IMR-90 (cell line): ENCODE measurements at regions of chr5 and their contacts with region 1.

Region 1: DNA sequence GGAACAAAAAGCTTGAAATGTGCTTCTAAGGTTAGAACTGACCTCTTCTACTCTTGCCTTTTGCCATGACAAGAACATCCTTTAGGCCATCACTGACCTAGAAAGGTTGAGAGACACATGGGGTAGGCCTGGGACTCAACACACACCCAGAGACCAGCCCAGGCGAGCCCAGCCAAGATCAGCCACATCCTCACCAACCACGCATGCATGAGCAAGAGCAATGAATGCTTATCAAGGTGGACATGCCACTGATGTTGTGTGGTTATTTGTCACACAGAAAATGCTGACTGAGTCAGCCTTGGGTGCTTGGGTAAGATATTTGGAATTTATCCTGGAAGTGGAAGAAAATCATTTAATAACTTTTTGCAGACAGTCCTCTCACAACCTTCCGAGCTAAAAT is 39.4 kb downstream of the SMIM23 start:
- DNase-seq: no peak
- ATAC-seq: no peak
- H3K4me3 ChIP-seq: no peak overlapping the region
- H3K27ac ChIP-seq: no peak overlapping the region
- H3K4me1 ChIP-seq: no peaks in the 10 kb centered on the region
- H3K27me3 ChIP-seq: peaks cover 10% of the 10 kb centered on the region
- CTCF ChIP-seq: no peak
- POLR2A ChIP-seq: no peak
- RAD21 ChIP-seq: no peak

Region 2: GRCh38 chr5:170791325-170791954 is 1033.6 kb before region 1 on chr5:
- CTCF ChIA-PET with region 1: no interaction called
- POLR2A ChIA-PET with region 1: no interaction called
- dilution Hi-C with region 1: no loop called
- in situ Hi-C with region 1: no loop called
- intact Hi-C with region 1: no loop called
- DNase-seq: peak; percentile 56
- ATAC-seq: peak; percentile 97
- H3K4me3 ChIP-seq: no peak overlapping the region
- H3K27ac ChIP-seq: no peak overlapping the region
- H3K4me1 ChIP-seq: no peaks in the 10 kb centered on the region
- H3K27me3 ChIP-seq: peaks cover 19% of the 10 kb centered on the region
- CTCF ChIP-seq: peak; percentile 61
- POLR2A ChIP-seq: no peak
- RAD21 ChIP-seq: peak; percentile 69

Region 3: DNA sequence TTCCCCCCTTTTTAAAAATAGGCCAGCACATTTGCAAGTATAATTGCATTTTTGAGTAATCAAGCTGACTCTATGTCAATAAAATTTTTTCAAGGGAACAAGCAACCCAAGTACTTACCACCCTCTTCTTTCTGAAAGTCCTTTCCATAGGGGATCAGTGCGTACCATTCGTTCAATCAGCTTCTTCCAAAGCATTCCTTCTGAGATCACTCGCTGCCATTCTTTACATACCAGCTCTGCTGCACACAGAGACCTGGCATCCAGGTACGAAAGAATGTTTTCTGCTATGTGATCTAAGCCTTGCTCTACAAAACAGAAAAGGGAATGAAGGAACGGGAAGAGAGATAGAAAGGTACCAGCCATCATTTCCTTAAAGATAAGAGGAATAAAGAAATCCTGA is 74.8 kb after region 1 on chr5:
- CTCF ChIA-PET with region 1: no interaction called
- POLR2A ChIA-PET with region 1: no interaction called
- dilution Hi-C with region 1: no loop called
- in situ Hi-C with region 1: no loop called
- intact Hi-C with region 1: loop called (anchors 2 kb)
- DNase-seq: no peak
- ATAC-seq: no peak
- H3K4me3 ChIP-seq: no peak overlapping the region
- H3K27ac ChIP-seq: no peak overlapping the region
- H3K4me1 ChIP-seq: no peaks in the 10 kb centered on the region
- H3K27me3 ChIP-seq: no peaks in the 10 kb centered on the region
- CTCF ChIP-seq: no peak
- POLR2A ChIP-seq: no peak
- RAD21 ChIP-seq: no peak